A549 (cell line): ENCODE measurements at regions of chr1 and their contacts with region 1.

Region 1: GRCh38 chr1:1441002-1441888 is 5.8 kb downstream of the VWA1 start:
- DNase-seq: peak in 1 of 2 experiments; percentile 71
- ATAC-seq: peak; percentile 72 to 85
- H3K4me3 ChIP-seq: no peak overlapping the region
- H3K27ac ChIP-seq: peak overlapping the region in 1 of 2 experiments; percentile 31; a peak in 2 of 6 replicates
- H3K4me1 ChIP-seq: peaks cover 24% of the 10 kb centered on the region
- CTCF ChIP-seq: peak; percentile 64
- EP300 ChIP-seq: no peak
- POLR2A ChIP-seq: no peak
- RAD21 ChIP-seq: peak; percentile 37 to 49

Region 2: GRCh38 chr1:1399187-1399871 is 41.9 kb before region 1 on chr1 and contains the start of gene CCNL2:
- CTCF ChIA-PET with region 1: interaction called, 14 read pairs
- POLR2A ChIA-PET with region 1: no interaction called
- DNase-seq: peak; percentile 83 to 97
- ATAC-seq: peak; percentile 95 to 96
- H3K4me3 ChIP-seq: peak within 1 kb of the TSS; percentile 96
- H3K27ac ChIP-seq: peak within 1 kb of the TSS; percentile 93 to 99
- H3K4me1 ChIP-seq: peaks cover 29% of the 10 kb centered on the region
- CTCF ChIP-seq: 0 out of 3 replicates have a peak, but pooled peaks have one; percentile 7
- EP300 ChIP-seq: no peak
- POLR2A ChIP-seq: peak; percentile 60
- RAD21 ChIP-seq: no peak
- polyA plus RNA-seq, gene CCNL2: 111 TPM in 2 replicates

Region 3: DNA sequence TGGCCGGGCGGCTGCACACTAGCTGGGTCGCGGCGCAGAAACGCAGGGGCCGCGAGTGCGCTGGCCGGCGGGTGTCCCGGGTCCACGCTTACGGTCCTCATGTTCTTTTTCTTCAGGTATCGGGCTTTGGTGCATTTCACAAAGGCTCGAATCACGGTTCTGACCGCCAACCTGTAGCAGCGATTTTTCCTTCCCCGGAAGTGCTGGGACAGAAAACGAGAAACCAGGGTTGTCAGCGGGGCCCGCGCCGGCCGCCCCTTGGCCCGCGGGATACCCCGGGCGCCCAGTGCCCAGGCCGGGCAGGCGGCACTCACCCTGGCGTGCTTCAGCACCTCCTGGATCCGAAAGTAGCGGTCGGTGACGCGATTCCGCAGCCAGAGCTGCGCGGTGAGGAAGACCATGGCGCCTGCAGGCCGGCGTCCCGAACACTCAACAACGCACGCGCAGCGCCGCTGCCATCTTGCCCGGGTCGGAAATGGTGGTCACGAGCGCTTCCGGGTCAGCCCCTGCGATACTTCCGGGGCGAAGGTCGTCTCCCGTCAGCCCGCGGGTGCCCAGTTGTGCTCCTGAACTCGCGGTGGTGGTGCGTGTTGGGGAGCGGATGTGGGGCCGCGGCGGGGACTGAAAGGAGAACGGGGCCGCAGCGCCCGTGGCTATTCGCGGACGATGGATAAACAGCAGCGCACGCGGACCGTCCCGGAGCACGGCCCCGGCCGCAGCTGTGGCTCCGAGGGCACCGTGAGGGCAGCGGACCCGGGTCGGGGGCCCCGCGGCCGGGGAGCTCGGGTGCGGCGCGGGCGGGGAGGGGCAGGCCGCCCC is 34.2 kb before region 1 on chr1 and contains the start of gene MRPL20:
- CTCF ChIA-PET with region 1: interaction called, 21 read pairs
- POLR2A ChIA-PET with region 1: interaction called, 4 read pairs
- DNase-seq: peak; percentile 86 to 87
- ATAC-seq: peak; percentile 97
- H3K4me3 ChIP-seq: peak within 1 kb of the TSS; percentile 69
- H3K27ac ChIP-seq: peak within 1 kb of the TSS; percentile 88 to 100
- H3K4me1 ChIP-seq: peaks cover 26% of the 10 kb centered on the region
- CTCF ChIP-seq: no peak
- EP300 ChIP-seq: no peak
- POLR2A ChIP-seq: peak; percentile 76
- RAD21 ChIP-seq: no peak
- polyA plus RNA-seq, gene MRPL20: 146 and 163 TPM in 2 replicates

Region 4: DNA sequence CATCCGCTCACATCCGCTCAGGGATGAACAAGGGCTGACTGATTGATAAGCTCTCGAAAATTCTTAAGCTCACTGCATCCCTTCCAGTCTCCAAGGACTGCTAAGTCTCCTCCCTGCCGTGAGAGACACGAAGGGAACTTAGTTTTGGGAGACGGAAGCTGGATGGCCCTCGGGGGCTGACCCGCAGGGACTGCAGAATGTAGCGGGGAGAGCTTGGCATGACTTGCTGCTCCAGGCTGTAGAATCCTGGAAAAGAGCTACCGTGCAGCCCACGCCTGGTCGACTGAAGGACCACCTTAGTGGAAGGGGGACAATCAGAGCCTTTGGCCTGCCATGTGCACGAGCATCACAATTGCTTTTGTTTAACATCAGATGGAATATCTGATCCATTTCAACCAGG is 25.5 kb before region 1 on chr1:
- CTCF ChIA-PET with region 1: interaction called, 11 read pairs
- POLR2A ChIA-PET with region 1: no interaction called
- DNase-seq: no peak
- ATAC-seq: no peak
- H3K4me3 ChIP-seq: no peak overlapping the region
- H3K27ac ChIP-seq: no peak overlapping the region
- H3K4me1 ChIP-seq: no peaks in the 10 kb centered on the region
- CTCF ChIP-seq: no peak
- EP300 ChIP-seq: no peak
- POLR2A ChIP-seq: no peak
- RAD21 ChIP-seq: no peak

Region 5: DNA sequence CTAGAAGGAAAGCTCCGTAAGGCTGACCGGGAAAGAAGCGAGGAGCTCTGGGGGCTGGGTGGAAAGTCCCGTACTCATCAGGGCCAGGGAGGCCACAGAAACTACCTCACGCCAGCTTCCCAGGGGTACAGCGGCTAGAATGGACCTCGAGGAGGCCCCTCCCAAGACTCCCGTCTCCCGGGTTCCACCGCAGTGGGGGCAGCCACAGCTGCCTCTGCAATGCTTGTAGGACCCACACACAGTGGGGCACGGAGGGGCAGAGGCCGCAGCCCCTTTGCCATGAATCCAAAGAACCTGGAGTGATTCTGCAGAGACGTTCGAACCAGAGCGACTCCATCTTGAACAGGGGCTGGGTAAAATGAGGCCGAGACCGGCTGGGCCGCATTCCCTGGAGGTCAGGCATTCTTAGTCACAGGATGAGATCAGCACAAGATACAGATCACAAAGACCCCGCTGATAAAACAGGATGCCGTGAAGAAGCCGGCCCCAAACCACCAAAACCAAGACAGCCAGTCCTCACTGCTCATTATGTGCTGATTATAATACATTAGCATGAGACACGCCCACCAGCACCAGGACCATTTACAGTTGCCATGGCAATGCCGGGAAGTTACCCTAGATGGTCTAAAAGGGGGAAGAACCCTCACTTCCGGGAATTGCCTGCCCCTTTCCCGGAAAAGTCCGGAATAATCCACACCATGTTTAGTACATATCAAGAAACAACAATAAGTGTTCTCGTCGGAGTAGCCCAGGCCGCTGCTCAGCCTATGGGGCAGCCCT is 18.6 kb before region 1 on chr1:
- CTCF ChIA-PET with region 1: interaction called, 13 read pairs
- POLR2A ChIA-PET with region 1: no interaction called
- DNase-seq: no peak
- ATAC-seq: no peak
- H3K4me3 ChIP-seq: no peak overlapping the region
- H3K27ac ChIP-seq: no peak overlapping the region
- H3K4me1 ChIP-seq: 0 out of 3 replicates have a peak, but pooled peaks cover 3% of the 10 kb centered on the region
- CTCF ChIP-seq: no peak
- EP300 ChIP-seq: no peak
- POLR2A ChIP-seq: no peak
- RAD21 ChIP-seq: no peak

Region 6: DNA sequence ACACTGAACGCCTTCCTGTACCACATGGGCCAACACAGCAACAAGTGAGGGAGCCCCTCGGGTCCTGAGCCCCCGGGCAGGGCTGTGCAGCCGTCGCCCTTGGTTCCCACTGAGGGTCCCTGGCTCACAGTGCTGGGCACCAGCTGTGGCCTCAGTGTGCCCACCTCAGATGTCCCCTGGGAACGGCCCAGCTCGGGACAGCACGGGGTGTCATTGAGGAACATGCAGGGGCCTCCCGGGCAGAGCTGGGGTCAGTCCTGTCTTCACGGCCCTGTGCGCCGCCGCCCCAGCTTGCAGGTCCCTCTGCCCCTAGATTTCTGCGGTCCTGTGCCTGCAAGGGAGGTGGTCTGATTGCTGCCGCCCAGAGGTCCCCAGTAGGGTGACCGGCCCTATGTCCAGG is 48.0 kb after region 1 on chr1:
- CTCF ChIA-PET with region 1: no interaction called
- POLR2A ChIA-PET with region 1: no interaction called
- DNase-seq: no peak
- ATAC-seq: no peak
- H3K4me3 ChIP-seq: no peak overlapping the region
- H3K27ac ChIP-seq: no peak overlapping the region
- H3K4me1 ChIP-seq: no peaks in the 10 kb centered on the region
- CTCF ChIP-seq: no peak
- EP300 ChIP-seq: no peak
- POLR2A ChIP-seq: no peak
- RAD21 ChIP-seq: no peak

Region 7: DNA sequence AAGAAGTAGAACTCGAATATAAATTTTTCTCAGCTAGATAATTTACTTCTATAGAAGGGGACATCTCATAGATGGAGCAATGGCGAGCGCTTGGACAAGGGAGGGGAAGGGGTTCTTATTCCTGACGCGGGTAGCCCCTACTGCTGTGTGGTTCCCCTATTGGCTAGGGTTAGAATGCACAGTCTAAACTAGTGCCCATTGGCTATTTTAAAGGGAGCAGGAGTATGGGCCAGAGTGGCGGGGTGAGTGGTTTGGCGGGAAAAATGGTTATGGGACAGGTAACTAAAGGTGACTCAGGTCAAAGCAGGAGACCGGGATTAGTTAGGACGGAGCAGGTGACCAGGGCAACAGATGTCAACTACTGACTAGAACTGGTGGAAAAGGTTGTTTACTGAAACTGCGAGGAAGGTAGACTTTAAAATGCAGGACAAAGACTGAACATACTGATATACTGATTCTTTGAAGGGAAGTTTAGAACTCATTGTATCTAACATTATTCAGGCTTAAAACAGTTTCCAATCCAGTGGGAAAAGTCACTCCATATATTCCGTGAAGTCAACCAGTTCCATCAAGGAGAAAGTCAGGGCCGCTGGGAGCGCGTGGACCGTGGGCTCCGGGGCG is 69.8 kb after region 1 on chr1:
- CTCF ChIA-PET with region 1: interaction called, 162 read pairs
- POLR2A ChIA-PET with region 1: no interaction called
- DNase-seq: peak in 1 of 2 experiments; percentile 38
- ATAC-seq: peak in 1 of 2 experiments; percentile 42; a peak in 5 of 6 replicates
- H3K4me3 ChIP-seq: peak overlapping the region; percentile 98
- H3K27ac ChIP-seq: peak overlapping the region; percentile 97 to 99
- H3K4me1 ChIP-seq: peaks cover 5% of the 10 kb centered on the region; the same call in 2 of the 3 replicates
- CTCF ChIP-seq: no peak
- EP300 ChIP-seq: no peak
- POLR2A ChIP-seq: no peak
- RAD21 ChIP-seq: no peak